CD4-positive, alpha-beta memory T cell (primary cell): ENCODE measurements at regions of chr15 and their contacts with region 1.

Region 1: GRCh38 chr15:100580414-100580813 is 21.6 kb downstream of the LINS1 start:
- DNase-seq: peak in 3 of 5 donors; percentile 14 to 41 (median 19)
- H3K4me3 ChIP-seq: no peak overlapping the region
- H3K4me3 Mint-ChIP-seq: peak overlapping the region in 7 of 8 donors; percentile 4 to 75 (median 53)
- H3K27ac ChIP-seq: peak overlapping the region; percentile 20
- H3K27ac Mint-ChIP-seq: peak overlapping the region; percentile 81 to 95 (median 91)
- H3K4me1 ChIP-seq: peaks cover 41% of the 10 kb centered on the region
- H3K4me1 Mint-ChIP-seq: peaks cover 41 to 66% (median 44%) of the 10 kb centered on the region in 4 donors
- H3K27me3 ChIP-seq: no peaks in the 10 kb centered on the region
- H3K27me3 Mint-ChIP-seq: no peaks in the 10 kb centered on the region

Region 2: DNA sequence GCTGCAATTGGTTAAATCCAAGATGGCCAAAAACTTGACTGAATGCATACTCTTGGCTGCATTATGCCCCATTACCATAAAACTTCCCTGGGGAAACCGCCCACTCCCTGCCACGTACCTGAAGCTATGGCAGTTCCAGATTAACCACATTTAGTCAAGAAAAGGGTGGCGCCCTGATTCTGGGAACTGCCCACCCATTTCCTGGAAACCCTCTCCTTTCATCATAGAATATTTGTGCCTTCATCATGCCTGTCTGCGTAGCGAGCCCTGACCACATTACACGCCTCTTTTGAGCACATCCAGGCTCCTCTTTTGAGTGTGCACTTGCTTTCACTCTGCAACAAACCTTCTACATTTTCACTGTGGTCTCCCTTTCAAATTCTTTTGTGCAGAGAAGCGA is 16.4 kb after region 1 on chr15:
- CTCF ChIA-PET with region 1: no interaction called
- POLR2A ChIA-PET with region 1: no interaction called
- intact Hi-C with region 1: loop called (anchors 2 kb)
- DNase-seq: peak; percentile 88 to 95 (median 92)
- H3K4me3 ChIP-seq: peak overlapping the region; percentile 48 to 59
- H3K4me3 Mint-ChIP-seq: peak overlapping the region; percentile 75 to 91 (median 86)
- H3K27ac ChIP-seq: peak overlapping the region; percentile 77
- H3K27ac Mint-ChIP-seq: peak overlapping the region in 6 of 7 donors; percentile 90 to 98 (median 96)
- H3K4me1 ChIP-seq: peaks cover 87% of the 10 kb centered on the region
- H3K4me1 Mint-ChIP-seq: peaks cover 52 to 71% (median 58%) of the 10 kb centered on the region in 4 donors
- H3K27me3 ChIP-seq: no peaks in the 10 kb centered on the region
- H3K27me3 Mint-ChIP-seq: no peaks in the 10 kb centered on the region